Mammary epithelial cell (primary cell): ENCODE measurements at regions of chr12 and their contacts with region 1.

Region 1: DNA sequence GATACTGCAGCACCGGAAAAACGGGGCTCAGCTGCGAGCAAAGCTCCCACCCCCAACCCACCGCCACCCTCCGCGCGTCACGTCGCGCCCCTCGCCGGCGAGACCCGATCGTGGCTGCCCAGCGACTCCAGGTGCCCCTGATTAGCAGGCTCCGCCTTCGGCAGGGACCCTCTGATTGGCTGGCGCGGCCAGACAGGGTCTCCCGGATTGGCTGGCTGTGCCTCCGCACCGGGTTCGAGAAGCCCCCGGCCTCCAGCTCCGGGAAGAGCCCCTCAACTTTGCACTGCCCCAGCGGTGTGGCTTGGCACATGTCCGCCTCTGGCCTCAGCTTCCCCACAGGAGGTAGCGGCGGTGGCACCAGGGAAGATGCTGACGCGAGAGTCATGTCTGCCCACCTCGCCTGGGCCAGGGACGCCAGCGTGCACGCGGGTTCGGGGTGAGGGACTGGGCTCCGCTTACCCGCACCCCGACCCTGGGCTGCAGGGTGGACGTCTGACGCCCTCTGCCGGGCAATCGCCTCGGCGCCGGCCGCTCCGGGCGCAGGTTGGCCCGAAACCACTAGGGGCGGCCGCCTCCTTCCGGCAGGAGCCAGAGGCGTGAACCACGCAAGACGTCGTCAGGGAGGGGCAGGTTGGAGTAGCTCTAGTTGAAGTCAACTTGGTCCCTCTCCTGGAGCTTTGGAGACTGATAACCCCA is 498 bp upstream of the RHOF start:
- DNase-seq: peak; percentile 88
- H3K4me3 ChIP-seq: peak overlapping the region; percentile 16 to 54 (median 52)
- H3K27ac ChIP-seq: peak overlapping the region; percentile 55
- H3K4me1 ChIP-seq: peaks cover 54% of the 10 kb centered on the region
- H3K27me3 ChIP-seq: no peaks in the 10 kb centered on the region
- CTCF ChIP-seq: peak; percentile 97 to 100

Region 2: DNA sequence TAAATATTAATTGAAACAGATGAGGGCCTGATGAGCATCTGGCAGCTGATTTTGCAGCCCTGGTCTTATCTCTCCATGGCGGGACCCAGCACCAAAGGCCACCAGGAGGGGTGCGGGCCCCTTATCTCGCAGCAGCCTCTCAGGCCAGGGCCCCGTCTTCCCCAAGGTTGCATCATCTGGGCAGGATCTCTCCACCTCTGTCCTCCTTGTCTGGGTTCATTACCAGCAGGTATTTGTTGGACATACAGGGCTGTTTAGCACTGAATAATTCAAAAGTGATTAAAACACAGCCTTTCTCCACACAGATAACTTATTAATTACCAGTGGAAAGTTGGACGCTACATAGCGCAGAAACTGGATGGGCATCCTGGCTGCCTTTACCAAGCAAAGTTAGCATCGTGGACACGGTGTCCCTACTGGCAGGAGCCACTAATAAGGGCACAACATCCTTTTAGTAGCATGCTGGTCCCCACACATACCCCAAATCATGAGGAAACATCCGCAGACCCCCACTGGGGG is 55.6 kb before region 1 on chr12:
- CTCF ChIA-PET with region 1: no interaction called
- dilution Hi-C with region 1: loop called (anchors 5 kb)
- in situ Hi-C with region 1: no loop called
- intact Hi-C with region 1: no loop called
- DNase-seq: no peak
- H3K4me3 ChIP-seq: no peak overlapping the region
- H3K27ac ChIP-seq: no peak overlapping the region
- H3K4me1 ChIP-seq: no peaks in the 10 kb centered on the region
- H3K27me3 ChIP-seq: no peaks in the 10 kb centered on the region
- CTCF ChIP-seq: no peak

Region 3: GRCh38 chr12:121823101-121823726 is 29.2 kb after region 1 on chr12:
- CTCF ChIA-PET with region 1: no interaction called
- dilution Hi-C with region 1: loop called (anchors 5 kb)
- in situ Hi-C with region 1: no loop called
- intact Hi-C with region 1: no loop called
- DNase-seq: no peak
- H3K4me3 ChIP-seq: no peak overlapping the region
- H3K27ac ChIP-seq: no peak overlapping the region
- H3K4me1 ChIP-seq: no peaks in the 10 kb centered on the region
- H3K27me3 ChIP-seq: no peaks in the 10 kb centered on the region
- CTCF ChIP-seq: peak in 1 of 2 donors; percentile 5

Region 4: GRCh38 chr12:121888478-121889266 is 94.7 kb after region 1 on chr12 and contains the start of gene PSMD9:
- CTCF ChIA-PET with region 1: interaction called, 21 read pairs
- dilution Hi-C with region 1: loop called (anchors 5 kb)
- in situ Hi-C with region 1: loop called (anchors 5 to 10 kb)
- intact Hi-C with region 1: loop called (anchors 1 kb)
- DNase-seq: peak; percentile 98
- H3K4me3 ChIP-seq: peak within 1 kb of the TSS; percentile 47 to 82 (median 78)
- H3K27ac ChIP-seq: peak within 1 kb of the TSS; percentile 85
- H3K4me1 ChIP-seq: peaks cover 21% of the 10 kb centered on the region
- H3K27me3 ChIP-seq: no peaks in the 10 kb centered on the region
- CTCF ChIP-seq: peak; percentile 59 to 87
- total RNA-seq, gene PSMD9: 39.8 to 80.6 TPM

Region 5: DNA sequence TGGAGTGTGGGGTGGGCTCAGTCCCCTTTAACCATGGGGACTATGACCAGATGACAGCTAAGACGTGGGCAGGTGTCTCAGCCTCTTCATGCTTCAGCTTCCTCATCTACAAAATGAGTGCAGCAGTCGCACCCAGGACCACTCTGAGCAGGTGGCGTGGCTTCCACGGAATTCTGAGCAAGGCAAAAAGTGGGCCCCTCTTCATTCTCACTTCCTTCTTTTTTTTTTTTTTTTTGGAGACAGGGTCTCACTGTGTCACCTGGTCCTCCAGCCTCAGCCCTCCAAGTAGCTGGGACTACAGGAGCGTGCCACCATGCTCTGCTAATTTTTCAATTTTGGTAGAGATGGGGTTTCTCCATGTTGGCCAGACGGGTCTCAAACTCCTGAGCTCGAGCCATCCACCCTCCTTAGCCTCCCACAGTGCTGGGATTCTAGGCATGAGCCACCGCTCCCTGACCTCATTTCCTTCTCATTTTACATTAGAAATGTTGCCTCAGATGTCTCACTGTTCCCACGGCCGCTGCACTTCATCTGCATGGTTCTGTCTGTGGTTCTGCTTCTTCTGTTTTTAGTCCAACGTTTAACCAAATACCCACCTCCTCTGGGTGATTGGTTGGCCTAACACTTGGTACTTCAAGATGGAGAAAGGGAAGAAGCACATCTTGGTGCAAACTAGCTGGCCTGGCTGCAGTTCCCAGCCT is 186.4 kb after region 1 on chr12:
- CTCF ChIA-PET with region 1: no interaction called
- dilution Hi-C with region 1: no loop called
- in situ Hi-C with region 1: no loop called
- intact Hi-C with region 1: no loop called
- DNase-seq: no peak
- H3K4me3 ChIP-seq: no peak overlapping the region
- H3K27ac ChIP-seq: no peak overlapping the region
- H3K4me1 ChIP-seq: no peaks in the 10 kb centered on the region
- H3K27me3 ChIP-seq: no peaks in the 10 kb centered on the region
- CTCF ChIP-seq: no peak

Region 6: DNA sequence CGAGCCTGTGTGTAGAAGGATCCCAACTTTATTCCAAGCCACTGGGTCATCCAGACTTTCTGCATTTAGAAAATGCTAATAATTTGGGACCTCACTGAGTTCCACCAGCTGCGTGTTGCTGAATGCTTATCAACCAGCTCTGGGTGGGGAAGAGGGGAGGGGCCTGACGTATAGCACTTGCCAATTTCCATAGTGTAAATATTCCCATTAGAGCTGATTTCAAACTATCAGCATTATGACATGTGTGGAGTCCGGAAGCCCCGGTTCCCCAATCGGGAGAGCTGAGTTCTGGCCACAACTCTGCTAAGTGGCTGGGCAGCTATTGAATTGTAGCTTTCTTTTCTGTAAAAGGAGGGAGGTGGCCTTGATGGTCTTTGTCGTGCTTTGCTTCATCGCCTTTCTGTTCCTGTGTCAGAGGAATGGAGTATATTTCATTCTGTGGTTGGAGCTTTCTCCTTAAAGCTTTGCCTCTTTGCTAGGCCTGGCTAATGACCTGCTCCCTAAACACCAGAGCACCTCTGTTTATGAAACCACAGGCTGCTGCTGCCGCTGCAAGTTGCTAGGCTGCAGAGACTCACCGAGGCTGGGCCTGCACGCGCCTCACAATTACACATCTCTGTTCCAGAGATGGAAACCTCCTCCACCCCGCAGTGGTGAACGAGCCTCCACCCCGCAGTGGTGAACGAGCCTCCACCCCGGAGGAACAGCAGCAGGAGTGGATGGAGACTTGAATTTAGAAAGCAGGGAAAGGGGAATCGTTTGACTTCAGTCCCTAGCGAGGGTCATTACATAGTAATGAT is 220.0 kb after region 1 on chr12:
- CTCF ChIA-PET with region 1: no interaction called
- dilution Hi-C with region 1: loop called (anchors 5 kb)
- in situ Hi-C with region 1: no loop called
- intact Hi-C with region 1: no loop called
- DNase-seq: no peak
- H3K4me3 ChIP-seq: no peak overlapping the region
- H3K27ac ChIP-seq: no peak overlapping the region
- H3K4me1 ChIP-seq: no peaks in the 10 kb centered on the region
- H3K27me3 ChIP-seq: no peaks in the 10 kb centered on the region
- CTCF ChIP-seq: no peak